IMR-90 (cell line): ENCODE measurements at regions of chr3 and their contacts with region 1.

Region 1: GRCh38 chr3:30286007-30286669 is 320.3 kb upstream of the TGFBR2 start:
- DNase-seq: peak; percentile 88
- ATAC-seq: peak; percentile 43
- H3K4me3 ChIP-seq: no peak overlapping the region
- H3K27ac ChIP-seq: no peak overlapping the region
- H3K4me1 ChIP-seq: peaks cover 5% of the 10 kb centered on the region
- H3K27me3 ChIP-seq: no peaks in the 10 kb centered on the region
- CTCF ChIP-seq: no peak
- POLR2A ChIP-seq: no peak
- RAD21 ChIP-seq: peak; percentile 8; the same call in 1 of the 2 replicates

Region 2: GRCh38 chr3:30421266-30421665 is 135.1 kb after region 1 on chr3:
- CTCF ChIA-PET with region 1: no interaction called
- POLR2A ChIA-PET with region 1: no interaction called
- dilution Hi-C with region 1: no loop called
- in situ Hi-C with region 1: no loop called
- intact Hi-C with region 1: loop called (anchors 5 kb)
- DNase-seq: peak; percentile 84
- ATAC-seq: peak; percentile 73
- H3K4me3 ChIP-seq: no peak overlapping the region
- H3K27ac ChIP-seq: no peak overlapping the region
- H3K4me1 ChIP-seq: peaks cover 6% of the 10 kb centered on the region
- H3K27me3 ChIP-seq: no peaks in the 10 kb centered on the region
- CTCF ChIP-seq: no peak
- POLR2A ChIP-seq: no peak
- RAD21 ChIP-seq: no peak

Region 3: GRCh38 chr3:30461311-30461710 is 175.2 kb after region 1 on chr3:
- CTCF ChIA-PET with region 1: no interaction called
- POLR2A ChIA-PET with region 1: interaction called, 20 read pairs
- dilution Hi-C with region 1: no loop called
- in situ Hi-C with region 1: no loop called
- intact Hi-C with region 1: no loop called
- DNase-seq: no peak
- ATAC-seq: no peak
- H3K4me3 ChIP-seq: no peak overlapping the region
- H3K27ac ChIP-seq: no peak overlapping the region
- H3K4me1 ChIP-seq: peaks cover 3% of the 10 kb centered on the region
- H3K27me3 ChIP-seq: no peaks in the 10 kb centered on the region
- CTCF ChIP-seq: no peak
- POLR2A ChIP-seq: no peak
- RAD21 ChIP-seq: no peak